CD8-positive, alpha-beta T cell (primary cell): ENCODE measurements at regions of chr4 and their contacts with region 1.

Region 1: DNA sequence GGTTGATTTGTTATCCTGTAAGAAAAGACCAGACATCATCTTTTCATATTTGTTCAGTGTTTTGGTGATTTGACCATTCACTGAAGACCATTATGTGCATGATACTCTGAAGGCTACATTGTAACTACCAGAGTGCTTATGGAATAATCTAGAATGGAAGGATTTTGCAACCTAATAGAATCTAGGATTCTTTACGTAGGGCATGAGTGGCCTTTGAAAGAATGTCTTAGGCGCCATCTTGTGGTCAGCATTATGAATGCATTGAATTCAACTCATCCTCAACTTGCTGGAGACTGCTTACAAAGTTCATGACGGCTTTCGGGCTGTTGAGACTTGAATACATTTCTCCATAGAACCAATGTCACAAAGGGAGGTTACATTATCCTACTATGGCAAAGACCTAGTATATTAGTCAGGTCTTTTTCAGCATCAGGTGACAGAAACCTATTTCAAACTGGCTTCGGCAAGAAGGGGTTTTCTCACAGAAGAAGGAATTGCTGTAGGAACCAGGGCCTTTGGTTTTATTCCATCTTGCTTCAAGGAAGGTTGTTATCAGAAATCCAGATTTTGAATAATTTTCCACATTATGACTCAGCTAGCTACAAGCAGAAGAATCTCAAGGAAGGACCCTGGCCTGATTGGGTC is 104.1 kb downstream of the GPAT3 start:
- DNase-seq: peak in 8 of 9 experiments; percentile 25 to 78 (median 57)
- ATAC-seq: peak; percentile 75
- H3K4me3 ChIP-seq: no peak overlapping the region
- H3K4me3 Mint-ChIP-seq: no peak overlapping the region
- H3K27ac ChIP-seq: no peak overlapping the region
- H3K27ac Mint-ChIP-seq: no peak overlapping the region
- H3K4me1 ChIP-seq: no peaks in the 10 kb centered on the region
- H3K4me1 Mint-ChIP-seq: peaks cover 2% of the 10 kb centered on the region
- H3K27me3 ChIP-seq: no peaks in the 10 kb centered on the region
- H3K27me3 Mint-ChIP-seq: peaks cover 7% of the 10 kb centered on the region
- CTCF ChIP-seq: peak; percentile 76

Region 2: DNA sequence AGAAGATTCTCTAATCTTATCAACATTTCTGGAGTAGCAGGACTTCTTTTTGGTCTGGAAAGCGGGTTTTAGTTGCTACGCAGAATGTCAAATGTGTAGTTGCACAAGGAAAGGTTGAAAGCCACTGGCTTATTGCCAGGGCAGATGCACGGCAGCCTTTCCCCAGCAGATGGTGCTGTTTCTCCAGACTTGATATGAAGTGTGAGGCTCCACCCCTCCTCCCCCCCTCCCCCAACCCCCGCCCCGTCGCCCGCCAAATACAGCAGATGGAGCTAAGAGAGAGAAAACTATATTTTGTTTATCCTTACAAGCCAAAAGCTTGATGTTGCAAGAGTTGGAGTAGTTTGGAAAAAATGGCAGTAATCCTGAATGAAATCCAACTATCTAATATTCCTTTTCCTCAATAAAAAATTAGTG is 1177.5 kb before region 1 on chr4:
- CTCF ChIA-PET with region 1: no interaction called
- POLR2A ChIA-PET with region 1: no interaction called
- intact Hi-C with region 1: loop called (anchors 2 kb)
- DNase-seq: peak; percentile 68 to 88 (median 84)
- ATAC-seq: peak; percentile 98
- H3K4me3 ChIP-seq: no peak overlapping the region
- H3K4me3 Mint-ChIP-seq: no peak overlapping the region
- H3K27ac ChIP-seq: no peak overlapping the region
- H3K27ac Mint-ChIP-seq: peak overlapping the region; percentile 20
- H3K4me1 ChIP-seq: peaks cover 3% of the 10 kb centered on the region
- H3K4me1 Mint-ChIP-seq: peaks cover 3% of the 10 kb centered on the region
- H3K27me3 ChIP-seq: no peaks in the 10 kb centered on the region
- H3K27me3 Mint-ChIP-seq: no peaks in the 10 kb centered on the region
- CTCF ChIP-seq: peak; percentile 79

Region 3: GRCh38 chr4:83490876-83491450 is 149.0 kb before region 1 on chr4:
- CTCF ChIA-PET with region 1: interaction called, 58 read pairs
- POLR2A ChIA-PET with region 1: interaction called, 3 read pairs
- intact Hi-C with region 1: loop called (anchors 1 kb)
- DNase-seq: peak in 3 of 9 experiments; percentile 11 to 64 (median 55)
- ATAC-seq: peak; percentile 87
- H3K4me3 ChIP-seq: no peak overlapping the region
- H3K4me3 Mint-ChIP-seq: no peak overlapping the region
- H3K27ac ChIP-seq: no peak overlapping the region
- H3K27ac Mint-ChIP-seq: no peak overlapping the region
- H3K4me1 ChIP-seq: no peaks in the 10 kb centered on the region
- H3K4me1 Mint-ChIP-seq: peaks cover 7% of the 10 kb centered on the region
- H3K27me3 ChIP-seq: no peaks in the 10 kb centered on the region
- H3K27me3 Mint-ChIP-seq: no peaks in the 10 kb centered on the region
- CTCF ChIP-seq: peak; percentile 98

Region 4: DNA sequence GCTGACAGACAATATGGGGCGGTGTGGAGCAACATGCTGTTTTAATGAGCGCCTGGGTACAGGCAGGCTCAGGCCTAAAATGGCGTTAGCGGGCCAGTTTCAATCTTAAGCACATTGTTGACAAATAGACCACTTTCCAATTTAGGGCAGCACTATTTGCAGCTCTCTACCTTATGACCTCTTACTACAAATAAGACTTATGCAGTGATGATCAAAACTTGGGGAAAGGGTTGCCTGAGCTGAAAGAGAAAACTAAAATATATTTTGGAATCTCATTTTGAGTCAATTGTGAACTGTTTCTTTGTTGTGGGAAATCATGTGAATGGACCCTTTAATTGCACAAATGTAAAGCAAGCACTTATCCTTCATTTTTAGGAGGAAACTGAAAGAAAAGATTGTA is 129.5 kb before region 1 on chr4:
- CTCF ChIA-PET with region 1: interaction called, 27 read pairs
- POLR2A ChIA-PET with region 1: interaction called, 3 read pairs
- intact Hi-C with region 1: loop called (anchors 1 kb)
- DNase-seq: no peak
- ATAC-seq: no peak
- H3K4me3 ChIP-seq: no peak overlapping the region
- H3K4me3 Mint-ChIP-seq: no peak overlapping the region
- H3K27ac ChIP-seq: no peak overlapping the region
- H3K27ac Mint-ChIP-seq: no peak overlapping the region
- H3K4me1 ChIP-seq: no peaks in the 10 kb centered on the region
- H3K4me1 Mint-ChIP-seq: no peaks in the 10 kb centered on the region
- H3K27me3 ChIP-seq: no peaks in the 10 kb centered on the region
- H3K27me3 Mint-ChIP-seq: no peaks in the 10 kb centered on the region
- CTCF ChIP-seq: no peak

Region 5: GRCh38 chr4:83974156-83974780 is 334.3 kb after region 1 on chr4:
- CTCF ChIA-PET with region 1: no interaction called
- POLR2A ChIA-PET with region 1: no interaction called
- intact Hi-C with region 1: loop called in 1 of 2 experiments (anchors 10 kb)
- DNase-seq: no peak
- ATAC-seq: no peak
- H3K4me3 ChIP-seq: no peak overlapping the region
- H3K4me3 Mint-ChIP-seq: no peak overlapping the region
- H3K27ac ChIP-seq: no peak overlapping the region
- H3K27ac Mint-ChIP-seq: no peak overlapping the region
- H3K4me1 ChIP-seq: no peaks in the 10 kb centered on the region
- H3K4me1 Mint-ChIP-seq: no peaks in the 10 kb centered on the region
- H3K27me3 ChIP-seq: no peaks in the 10 kb centered on the region
- H3K27me3 Mint-ChIP-seq: no peaks in the 10 kb centered on the region
- CTCF ChIP-seq: no peak

Region 6: GRCh38 chr4:84167564-84167963 is 527.6 kb after region 1 on chr4:
- CTCF ChIA-PET with region 1: no interaction called
- POLR2A ChIA-PET with region 1: no interaction called
- intact Hi-C with region 1: no loop called
- DNase-seq: no peak
- ATAC-seq: no peak
- H3K4me3 ChIP-seq: no peak overlapping the region
- H3K4me3 Mint-ChIP-seq: no peak overlapping the region
- H3K27ac ChIP-seq: no peak overlapping the region
- H3K27ac Mint-ChIP-seq: no peak overlapping the region
- H3K4me1 ChIP-seq: no peaks in the 10 kb centered on the region
- H3K4me1 Mint-ChIP-seq: no peaks in the 10 kb centered on the region
- H3K27me3 ChIP-seq: no peaks in the 10 kb centered on the region
- H3K27me3 Mint-ChIP-seq: no peaks in the 10 kb centered on the region
- CTCF ChIP-seq: no peak

Region 7: GRCh38 chr4:84971319-84971932 is 1331.5 kb after region 1 on chr4:
- CTCF ChIA-PET with region 1: interaction called, 4 read pairs
- POLR2A ChIA-PET with region 1: no interaction called
- intact Hi-C with region 1: loop called (anchors 2 to 5 kb)
- DNase-seq: peak in 1 of 9 experiments; percentile 13
- ATAC-seq: no peak
- H3K4me3 ChIP-seq: no peak overlapping the region
- H3K4me3 Mint-ChIP-seq: no peak overlapping the region
- H3K27ac ChIP-seq: no peak overlapping the region
- H3K27ac Mint-ChIP-seq: no peak overlapping the region
- H3K4me1 ChIP-seq: no peaks in the 10 kb centered on the region
- H3K4me1 Mint-ChIP-seq: peaks cover 10% of the 10 kb centered on the region
- H3K27me3 ChIP-seq: peaks cover 0 to 2% of the 10 kb centered on the region in 2 experiments
- H3K27me3 Mint-ChIP-seq: peaks cover 29% of the 10 kb centered on the region
- CTCF ChIP-seq: no peak